ENCODE measurements at regions of chr12 and their contacts with region 1.

Region 1: DNA sequence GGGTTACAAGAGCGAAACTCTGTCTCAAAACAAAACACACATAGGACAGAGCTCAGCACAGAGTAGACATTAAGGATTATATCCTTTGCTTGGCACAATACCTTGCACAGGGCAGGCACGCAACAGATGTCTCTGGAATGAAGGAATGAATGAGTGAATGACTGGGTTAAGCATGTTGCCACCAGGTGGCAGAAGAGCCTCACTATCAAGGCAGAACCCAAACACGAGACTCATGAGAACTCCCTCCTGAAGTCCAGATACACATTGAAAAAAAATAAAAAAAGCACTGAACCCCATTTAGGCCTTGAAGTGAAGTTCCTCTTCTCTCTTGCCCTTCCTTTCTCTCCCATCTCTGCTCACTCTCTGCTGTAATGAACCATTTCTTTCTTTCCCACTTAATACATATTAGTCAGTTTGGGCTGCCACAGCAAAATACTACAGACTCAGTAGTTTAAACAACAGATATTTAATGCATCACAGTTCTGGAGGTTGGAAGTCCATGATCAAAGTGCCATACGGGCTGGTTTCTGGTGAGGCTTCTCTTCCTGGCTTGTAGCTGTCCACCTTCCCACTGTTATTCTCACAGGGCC is 26.6 kb upstream of the LTA4H start:
- DNase-seq: peak; percentile 61 to 91
- ATAC-seq: peak; percentile 83 to 96 (median 92)
- H3K4me3 ChIP-seq: no peak overlapping the region
- H3K4me3 Mint-ChIP-seq: no peak overlapping the region
- H3K27ac ChIP-seq: no peak overlapping the region
- H3K27ac Mint-ChIP-seq: no peak overlapping the region
- H3K4me1 ChIP-seq: peaks cover 11% of the 10 kb centered on the region
- H3K4me1 Mint-ChIP-seq: peaks cover 26 to 29% of the 10 kb centered on the region in 2 donors
- H3K27me3 ChIP-seq: no peaks in the 10 kb centered on the region
- H3K27me3 Mint-ChIP-seq: peaks cover 3 to 8% of the 10 kb centered on the region in 2 donors
- CTCF ChIP-seq: peak; percentile 75

Region 2: DNA sequence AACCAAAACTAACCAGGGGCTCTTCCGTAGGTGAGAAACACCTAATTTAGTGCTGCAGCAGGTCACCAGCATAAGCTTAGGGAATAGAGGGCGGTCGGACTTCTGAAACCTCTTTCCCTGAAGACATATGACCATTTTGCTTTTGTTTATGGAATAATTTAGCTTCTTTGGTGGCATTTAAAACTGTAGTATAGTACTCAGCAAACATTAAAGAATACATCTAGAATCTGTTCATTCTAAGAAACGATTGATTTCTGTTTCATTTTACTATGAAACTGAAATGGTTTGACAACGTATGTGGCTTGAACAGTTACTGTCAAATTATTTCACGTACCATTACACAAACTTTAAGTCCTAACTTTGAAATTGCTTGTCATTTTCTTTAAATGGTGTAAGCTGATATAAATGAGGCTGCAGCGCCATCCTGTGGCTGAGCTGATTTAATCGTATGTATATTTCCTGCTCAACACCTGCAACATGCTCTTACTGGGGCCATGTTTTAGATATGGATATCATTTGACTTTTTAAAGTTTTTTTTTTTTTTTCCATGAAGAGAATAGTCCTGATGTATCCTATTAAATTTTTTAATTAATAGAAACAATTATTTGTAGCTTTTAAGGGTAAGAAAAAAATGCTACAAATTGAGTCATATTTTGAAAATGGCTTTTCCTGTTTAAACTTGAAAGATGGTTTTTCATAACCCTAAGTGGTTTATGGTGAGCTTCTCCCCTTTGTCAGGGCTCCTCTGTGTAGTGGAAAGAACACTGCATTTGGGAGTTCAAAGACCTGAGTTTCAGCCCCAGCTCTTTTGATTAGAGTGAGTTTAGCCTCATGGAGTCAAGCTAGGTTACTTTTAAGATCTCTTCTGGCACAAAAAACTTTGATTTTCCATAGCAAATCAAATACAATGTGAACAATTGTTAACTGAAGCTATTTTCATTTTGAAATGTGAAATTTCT is 454.8 kb after region 1 on chr12:
- intact Hi-C with region 1: loop called (anchors 1 kb)
- DNase-seq: peak; percentile 77 to 93
- ATAC-seq: peak; percentile 87 to 95 (median 93)
- H3K4me3 ChIP-seq: no peak overlapping the region
- H3K4me3 Mint-ChIP-seq: peak overlapping the region; percentile 13
- H3K27ac ChIP-seq: no peak overlapping the region
- H3K27ac Mint-ChIP-seq: peak overlapping the region; percentile 62 to 80
- H3K4me1 ChIP-seq: peaks cover 2% of the 10 kb centered on the region
- H3K4me1 Mint-ChIP-seq: peaks cover 4 to 6% of the 10 kb centered on the region in 2 donors
- H3K27me3 ChIP-seq: no peaks in the 10 kb centered on the region
- H3K27me3 Mint-ChIP-seq: peaks cover 0 to 4% of the 10 kb centered on the region in 2 donors
- CTCF ChIP-seq: peak; percentile 84

Measured in natural killer cell (primary cell).